Astrocyte of the cerebellum (primary cell): ENCODE measurements at regions of chr7 and their contacts with region 1.

Region 1: DNA sequence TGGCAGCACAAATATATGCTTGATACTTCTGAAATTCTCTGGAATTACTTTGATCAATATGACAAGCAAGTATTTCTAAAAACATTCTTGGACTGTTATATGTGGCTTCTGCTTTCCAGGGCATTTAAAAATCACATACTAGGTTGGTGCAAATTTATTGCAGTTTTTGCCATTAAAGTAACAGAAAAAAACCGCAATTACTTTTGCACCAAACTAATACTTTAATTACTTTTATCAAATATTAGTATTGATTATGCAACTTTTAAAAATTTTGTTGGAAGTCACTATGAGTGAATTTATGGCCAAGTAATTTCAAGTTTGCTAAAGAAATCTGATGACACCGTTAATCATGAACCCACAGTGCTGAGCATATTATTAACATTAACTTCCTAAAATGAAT is 235.5 kb upstream of the PCLO start:
- DNase-seq: no peak
- H3K4me3 ChIP-seq: no peak overlapping the region
- CTCF ChIP-seq: no peak

Region 2: GRCh38 chr7:83486957-83487356 is 88.8 kb after region 1 on chr7:
- in situ Hi-C with region 1: no loop called
- DNase-seq: no peak
- H3K4me3 ChIP-seq: no peak overlapping the region
- CTCF ChIP-seq: no peak

Region 3: DNA sequence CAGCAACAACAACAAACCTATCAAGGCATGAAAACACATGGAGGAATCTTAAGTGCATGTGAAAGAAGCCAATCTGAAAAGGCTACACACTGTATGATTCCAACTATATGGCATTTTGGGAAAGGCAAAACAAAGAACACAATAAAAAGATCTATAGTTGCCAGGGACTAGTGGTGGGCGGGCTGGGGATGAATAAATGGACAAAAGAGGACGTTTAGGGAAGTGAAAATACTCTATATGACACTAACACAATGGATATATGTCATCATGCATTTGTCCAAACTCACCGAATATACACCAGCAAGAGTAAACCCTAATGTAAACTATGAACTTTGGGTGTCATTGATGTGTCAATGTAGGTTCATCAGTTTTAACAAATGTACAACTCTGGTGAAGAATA is 161.7 kb after region 1 on chr7:
- in situ Hi-C with region 1: no loop called
- DNase-seq: no peak
- H3K4me3 ChIP-seq: no peak overlapping the region
- CTCF ChIP-seq: no peak

Region 4: DNA sequence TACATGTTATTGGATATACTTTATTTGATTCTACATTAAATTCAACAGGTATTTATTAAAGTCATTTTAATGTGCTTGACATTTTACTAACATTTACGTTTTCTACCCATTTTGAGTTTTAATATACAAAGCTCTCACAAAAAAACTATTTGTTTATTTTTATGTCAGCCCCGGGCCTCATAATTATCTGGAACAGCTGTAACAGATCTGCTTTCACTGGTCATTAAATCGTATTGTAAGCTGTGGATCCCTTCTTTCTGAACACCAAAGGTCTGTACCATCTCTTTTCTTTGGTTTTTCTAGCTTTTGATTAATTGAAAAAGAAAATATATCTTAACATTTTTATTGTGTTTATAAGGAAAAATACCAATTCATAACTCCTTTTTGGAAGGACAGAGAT is 177.3 kb after region 1 on chr7:
- in situ Hi-C with region 1: no loop called
- DNase-seq: no peak
- H3K4me3 ChIP-seq: no peak overlapping the region
- CTCF ChIP-seq: no peak

Region 5: DNA sequence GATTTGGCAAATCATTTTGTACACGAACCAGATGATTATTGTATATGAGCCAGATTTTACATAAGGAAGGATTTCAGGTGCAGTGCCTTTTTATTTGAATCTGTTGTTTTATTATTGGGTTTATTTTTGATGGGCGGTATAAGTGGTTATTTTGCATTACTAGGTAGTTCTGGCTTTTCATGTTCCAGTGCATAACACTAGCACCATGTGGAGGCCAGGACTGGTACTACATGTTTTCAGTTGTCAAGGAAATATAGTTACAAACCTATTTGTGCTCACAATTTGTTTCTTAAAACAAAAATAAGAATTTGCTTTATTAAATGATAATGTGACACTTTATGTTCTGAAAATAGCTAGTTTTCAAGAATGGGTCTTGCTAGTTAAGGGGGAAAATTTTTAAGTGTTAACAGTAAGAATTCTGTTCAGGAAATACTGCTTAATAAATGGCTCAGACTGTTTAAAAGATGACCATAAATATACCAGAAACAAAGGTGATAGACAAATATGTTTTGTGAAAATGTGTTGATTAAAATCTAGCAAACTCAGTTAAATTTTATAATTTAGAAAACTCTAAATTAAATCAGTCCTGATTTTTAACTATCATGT is 257.9 kb after region 1 on chr7:
- in situ Hi-C with region 1: loop called (anchors 5 kb)
- DNase-seq: peak; percentile 45
- H3K4me3 ChIP-seq: no peak overlapping the region
- CTCF ChIP-seq: peak; percentile 95